Activated CD4-positive, alpha-beta T cell treated with anti-CD3 and anti-CD28 coated beads for 36 hours (primary cell): ENCODE measurements at regions of chr6 and their contacts with region 1.

Region 1: DNA sequence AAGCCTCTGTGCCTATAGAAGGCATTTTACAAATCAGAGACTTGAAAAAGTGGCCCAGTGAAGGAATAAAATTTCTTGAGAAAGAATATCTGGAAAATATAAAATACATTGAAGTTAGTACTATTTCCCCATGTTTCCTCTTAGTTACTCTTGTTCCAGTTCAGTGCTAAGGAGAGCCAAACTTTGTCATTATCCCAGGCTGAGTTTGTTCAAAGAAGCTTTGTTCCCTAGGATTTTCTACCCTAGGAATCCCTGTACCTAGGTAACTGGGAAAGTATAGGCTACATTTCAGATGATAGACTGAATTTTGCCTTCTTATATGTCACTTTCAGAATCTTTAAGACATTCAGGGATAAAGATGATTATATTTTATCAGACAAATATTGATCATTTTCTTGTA is 1395.7 kb upstream of the MAP3K7 start:
- DNase-seq: no peak
- ATAC-seq: no peak
- H3K4me3 Mint-ChIP-seq: no peak overlapping the region
- H3K27ac Mint-ChIP-seq: no peak overlapping the region
- H3K4me1 Mint-ChIP-seq: no peaks in the 10 kb centered on the region
- H3K27me3 Mint-ChIP-seq: no peaks in the 10 kb centered on the region

Region 2: GRCh38 chr6:91743756-91744155 is 238.8 kb before region 1 on chr6:
- CTCF ChIA-PET with region 1: no interaction called
- POLR2A ChIA-PET with region 1: no interaction called
- intact Hi-C with region 1: loop called in 1 of 2 experiments (anchors 5 kb)
- DNase-seq: no peak
- ATAC-seq: no peak
- H3K4me3 Mint-ChIP-seq: no peak overlapping the region
- H3K27ac Mint-ChIP-seq: no peak overlapping the region
- H3K4me1 Mint-ChIP-seq: no peaks in the 10 kb centered on the region
- H3K27me3 Mint-ChIP-seq: no peaks in the 10 kb centered on the region

Region 3: GRCh38 chr6:92050216-92050615 is 67.7 kb after region 1 on chr6:
- CTCF ChIA-PET with region 1: no interaction called
- POLR2A ChIA-PET with region 1: no interaction called
- intact Hi-C with region 1: no loop called
- DNase-seq: no peak
- ATAC-seq: no peak
- H3K4me3 Mint-ChIP-seq: no peak overlapping the region
- H3K27ac Mint-ChIP-seq: no peak overlapping the region
- H3K4me1 Mint-ChIP-seq: no peaks in the 10 kb centered on the region
- H3K27me3 Mint-ChIP-seq: no peaks in the 10 kb centered on the region